GM12878 (cell line): ENCODE measurements at regions of chr5 and their contacts with region 1.

Region 1: GRCh38 chr5:115841382-115842088 is at the starts of genes AP3S1 and ATG12:
- DNase-seq: peak; percentile 88
- ATAC-seq: peak; percentile 84
- H3K4me3 ChIP-seq: peak within 1 kb of the TSS; percentile 83
- H3K27ac ChIP-seq: peak within 1 kb of the TSS; percentile 91
- H3K4me1 ChIP-seq: peaks cover 19% of the 10 kb centered on the region
- H3K27me3 ChIP-seq: no peaks in the 10 kb centered on the region
- CTCF ChIP-seq: no peak
- EP300 ChIP-seq: no peak
- POLR2A ChIP-seq: peak; percentile 93
- RAD21 ChIP-seq: no peak
- polyA plus RNA-seq, gene AP3S1: 36.4 to 48.5 TPM
- polyA plus RNA-seq, gene ATG12: 67.4 to 92.0 TPM

Region 2: DNA sequence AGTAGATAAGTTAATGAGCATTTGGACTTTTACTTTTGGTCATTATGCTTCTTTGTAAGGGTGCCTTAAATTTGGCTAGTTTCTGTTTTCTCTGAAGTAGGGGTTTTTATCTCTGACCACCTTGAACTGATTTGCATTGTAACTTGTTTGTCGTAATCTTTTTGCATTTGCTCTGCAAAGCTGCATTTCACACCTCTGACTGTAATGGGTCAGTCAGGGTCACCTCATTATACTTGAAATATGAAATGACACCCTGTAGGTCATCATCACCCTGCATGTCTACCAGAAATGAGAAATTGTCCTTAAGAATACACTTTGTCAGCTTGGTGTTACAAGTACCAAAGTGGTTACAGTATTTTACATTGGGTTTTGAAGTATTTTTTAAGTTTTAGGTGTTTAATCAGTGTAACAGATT is 1405.6 kb before region 1 on chr5:
- CTCF ChIA-PET with region 1: no interaction called
- POLR2A ChIA-PET with region 1: interaction called, 4 read pairs
- RAD21 ChIA-PET with region 1: no interaction called
- SMC1A ChIA-PET with region 1: no interaction called
- in situ Hi-C with region 1: no loop called
- intact Hi-C with region 1: loop called (anchors 10 kb)
- DNase-seq: peak; percentile 73
- ATAC-seq: peak; percentile 84
- H3K4me3 ChIP-seq: no peak overlapping the region
- H3K27ac ChIP-seq: no peak overlapping the region
- H3K4me1 ChIP-seq: no peaks in the 10 kb centered on the region; the same call in 1 of the 2 replicates
- H3K27me3 ChIP-seq: no peaks in the 10 kb centered on the region
- CTCF ChIP-seq: no peak
- EP300 ChIP-seq: peak; percentile 69 to 82; a peak in 2 of 4 replicates
- POLR2A ChIP-seq: no peak
- RAD21 ChIP-seq: no peak

Region 3: DNA sequence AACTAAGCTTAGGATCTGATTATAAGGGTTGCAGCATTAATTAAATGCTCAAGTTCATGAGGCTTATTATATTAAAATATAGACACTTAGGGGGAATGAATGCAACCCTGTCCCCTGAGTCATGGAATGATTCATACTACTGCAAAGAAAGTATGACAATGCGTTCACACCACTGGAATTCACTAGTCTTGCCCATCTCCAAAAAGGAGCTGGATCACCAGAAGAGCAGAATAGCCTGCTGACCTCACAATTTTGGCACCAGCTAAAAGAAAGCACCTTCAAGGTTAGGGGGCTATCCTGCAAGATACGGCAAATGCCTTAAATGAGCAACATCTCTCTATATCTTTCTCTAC is 183.7 kb before region 1 on chr5:
- CTCF ChIA-PET with region 1: no interaction called
- POLR2A ChIA-PET with region 1: no interaction called
- RAD21 ChIA-PET with region 1: no interaction called
- SMC1A ChIA-PET with region 1: no interaction called
- in situ Hi-C with region 1: no loop called
- intact Hi-C with region 1: no loop called
- DNase-seq: no peak
- ATAC-seq: no peak
- H3K4me3 ChIP-seq: no peak overlapping the region
- H3K27ac ChIP-seq: no peak overlapping the region
- H3K4me1 ChIP-seq: no peaks in the 10 kb centered on the region
- H3K27me3 ChIP-seq: no peaks in the 10 kb centered on the region
- CTCF ChIP-seq: no peak
- EP300 ChIP-seq: no peak
- POLR2A ChIP-seq: no peak
- RAD21 ChIP-seq: no peak

Region 4: GRCh38 chr5:115831163-115831768 is 10.3 kb before region 1 on chr5:
- CTCF ChIA-PET with region 1: interaction called, 16 read pairs
- POLR2A ChIA-PET with region 1: no interaction called
- RAD21 ChIA-PET with region 1: no interaction called
- SMC1A ChIA-PET with region 1: interaction called, 4 read pairs
- in situ Hi-C with region 1: no loop called
- intact Hi-C with region 1: no loop called
- DNase-seq: no peak
- ATAC-seq: peak; percentile 84
- H3K4me3 ChIP-seq: no peak overlapping the region
- H3K27ac ChIP-seq: no peak overlapping the region
- H3K4me1 ChIP-seq: no peaks in the 10 kb centered on the region
- H3K27me3 ChIP-seq: no peaks in the 10 kb centered on the region
- CTCF ChIP-seq: peak; percentile 65 to 80 (median 72)
- EP300 ChIP-seq: no peak
- POLR2A ChIP-seq: no peak
- RAD21 ChIP-seq: peak; percentile 67

Region 5: GRCh38 chr5:115895821-115896220 is 54.3 kb after region 1 on chr5:
- CTCF ChIA-PET with region 1: no interaction called
- POLR2A ChIA-PET with region 1: no interaction called
- RAD21 ChIA-PET with region 1: no interaction called
- SMC1A ChIA-PET with region 1: no interaction called
- in situ Hi-C with region 1: no loop called
- intact Hi-C with region 1: no loop called
- DNase-seq: no peak
- ATAC-seq: no peak
- H3K4me3 ChIP-seq: no peak overlapping the region
- H3K27ac ChIP-seq: no peak overlapping the region
- H3K4me1 ChIP-seq: no peaks in the 10 kb centered on the region
- H3K27me3 ChIP-seq: no peaks in the 10 kb centered on the region
- CTCF ChIP-seq: no peak
- EP300 ChIP-seq: no peak
- POLR2A ChIP-seq: no peak
- RAD21 ChIP-seq: no peak

Region 6: GRCh38 chr5:116032094-116032517 is 190.6 kb after region 1 on chr5 and contains the start of gene ARL14EPL:
- CTCF ChIA-PET with region 1: interaction called, 5 read pairs
- POLR2A ChIA-PET with region 1: no interaction called
- RAD21 ChIA-PET with region 1: interaction called, 3 read pairs
- SMC1A ChIA-PET with region 1: interaction called, 5 read pairs
- in situ Hi-C with region 1: no loop called
- intact Hi-C with region 1: loop called (anchors 1 kb)
- DNase-seq: no peak
- ATAC-seq: peak; percentile 95
- H3K4me3 ChIP-seq: no peak within 1 kb of the TSS
- H3K27ac ChIP-seq: no peak within 1 kb of the TSS
- H3K4me1 ChIP-seq: peaks cover 13% of the 10 kb centered on the region; the same call in 1 of the 2 replicates
- H3K27me3 ChIP-seq: no peaks in the 10 kb centered on the region; a peak in 1 of 4 replicates
- CTCF ChIP-seq: peak; percentile 29 to 56 (median 53); a peak in 4 of 6 replicates
- EP300 ChIP-seq: no peak
- POLR2A ChIP-seq: no peak
- RAD21 ChIP-seq: peak; percentile 82
- polyA plus RNA-seq, gene ARL14EPL: not detected

Region 7: GRCh38 chr5:116068028-116068632 is 226.6 kb after region 1 on chr5:
- CTCF ChIA-PET with region 1: interaction called, 6 read pairs
- POLR2A ChIA-PET with region 1: no interaction called
- RAD21 ChIA-PET with region 1: interaction called, 3 read pairs
- SMC1A ChIA-PET with region 1: interaction called, 11 read pairs
- in situ Hi-C with region 1: loop called (anchors 25 kb)
- intact Hi-C with region 1: loop called (anchors 2 kb)
- DNase-seq: no peak
- ATAC-seq: peak; percentile 74
- H3K4me3 ChIP-seq: no peak overlapping the region
- H3K27ac ChIP-seq: no peak overlapping the region
- H3K4me1 ChIP-seq: no peaks in the 10 kb centered on the region
- H3K27me3 ChIP-seq: peaks cover 2 to 3% of the 10 kb centered on the region in 2 experiments; a peak in 3 of 4 replicates
- CTCF ChIP-seq: peak; percentile 42 to 68 (median 67); a peak in 5 of 6 replicates
- EP300 ChIP-seq: no peak
- POLR2A ChIP-seq: no peak
- RAD21 ChIP-seq: peak; percentile 84